Heart right ventricle (tissue), 16 donors: ENCODE measurements at regions of chr7 and their contacts with region 1.

Region 1: GRCh38 chr7:129224251-129225205 is at the start of gene AHCYL2:
- DNase-seq: peak; percentile 98 to 99
- ATAC-seq: peak; percentile 99 to 100 (median 99)
- H3K4me3 ChIP-seq: peak within 1 kb of the TSS; percentile 66 to 97 (median 82)
- H3K27ac ChIP-seq: peak within 1 kb of the TSS; percentile 83 to 98 (median 92)
- H3K4me1 ChIP-seq: peaks cover 0 to 30% (median 15%) of the 10 kb centered on the region in 9 donors
- H3K27me3 ChIP-seq: no peaks in the 10 kb centered on the region
- CTCF ChIP-seq: no peak
- total RNA-seq, gene AHCYL2: 4.6 to 7.7 (median 5.7) TPM

Region 2: DNA sequence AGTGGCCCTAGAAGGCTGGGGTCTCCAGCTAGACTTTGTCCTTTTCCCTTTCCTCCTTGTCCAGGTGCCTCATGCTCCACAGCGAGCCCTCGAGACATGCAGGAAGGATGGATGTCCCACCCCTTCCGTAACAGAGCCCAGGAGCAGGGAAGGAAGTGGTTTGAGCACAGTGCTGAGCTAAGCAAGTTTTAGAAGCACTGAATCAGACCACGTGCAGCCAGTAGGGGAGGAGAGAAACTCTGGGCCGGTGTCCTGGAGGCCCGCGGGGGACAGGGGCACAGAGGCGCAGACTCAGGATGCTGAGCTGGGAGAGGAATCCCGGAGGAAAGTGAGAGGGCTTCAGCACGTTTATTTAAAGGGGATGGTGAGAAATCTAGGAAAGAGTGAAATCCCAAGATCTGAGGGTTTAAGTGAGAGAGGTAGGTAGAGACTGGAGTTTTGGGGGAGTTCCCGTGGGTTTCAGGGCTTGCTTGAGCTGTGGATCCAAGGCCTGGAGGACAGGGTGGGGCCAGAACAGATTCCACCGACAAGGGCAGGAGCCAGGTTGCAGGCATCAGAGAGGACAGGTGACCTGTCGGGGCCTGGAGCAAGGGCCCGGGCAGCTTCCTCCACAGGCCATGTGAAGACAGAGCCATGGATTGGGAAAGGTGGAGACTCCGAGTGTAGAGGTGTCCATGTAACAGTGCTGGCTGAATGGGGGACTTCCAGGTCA is 291.2 kb before region 1 on chr7:
- intact Hi-C with region 1: no loop called
- DNase-seq: no peak
- ATAC-seq: peak in 7 of 8 donors; percentile 39 to 70 (median 59)
- H3K4me3 ChIP-seq: peak overlapping the region in 1 of 10 donors; percentile 10
- H3K27ac ChIP-seq: peak overlapping the region in 1 of 10 donors; percentile 81
- H3K4me1 ChIP-seq: peaks cover 0 to 47% (median 5%) of the 10 kb centered on the region in 9 donors
- H3K27me3 ChIP-seq: peaks cover 0 to 70% (median 30%) of the 10 kb centered on the region in 7 donors
- CTCF ChIP-seq: no peak

Region 3: GRCh38 chr7:129298268-129298893 is 73.9 kb after region 1 on chr7:
- intact Hi-C with region 1: loop called in 6 of 10 experiments (anchors 2 to 5 kb)
- DNase-seq: peak; percentile 21 to 34
- ATAC-seq: no peak
- H3K4me3 ChIP-seq: no peak overlapping the region
- H3K27ac ChIP-seq: no peak overlapping the region
- H3K4me1 ChIP-seq: peaks cover 0 to 12% (median 8%) of the 10 kb centered on the region in 9 donors
- H3K27me3 ChIP-seq: no peaks in the 10 kb centered on the region
- CTCF ChIP-seq: peak; percentile 29 to 81 (median 73)

Region 4: DNA sequence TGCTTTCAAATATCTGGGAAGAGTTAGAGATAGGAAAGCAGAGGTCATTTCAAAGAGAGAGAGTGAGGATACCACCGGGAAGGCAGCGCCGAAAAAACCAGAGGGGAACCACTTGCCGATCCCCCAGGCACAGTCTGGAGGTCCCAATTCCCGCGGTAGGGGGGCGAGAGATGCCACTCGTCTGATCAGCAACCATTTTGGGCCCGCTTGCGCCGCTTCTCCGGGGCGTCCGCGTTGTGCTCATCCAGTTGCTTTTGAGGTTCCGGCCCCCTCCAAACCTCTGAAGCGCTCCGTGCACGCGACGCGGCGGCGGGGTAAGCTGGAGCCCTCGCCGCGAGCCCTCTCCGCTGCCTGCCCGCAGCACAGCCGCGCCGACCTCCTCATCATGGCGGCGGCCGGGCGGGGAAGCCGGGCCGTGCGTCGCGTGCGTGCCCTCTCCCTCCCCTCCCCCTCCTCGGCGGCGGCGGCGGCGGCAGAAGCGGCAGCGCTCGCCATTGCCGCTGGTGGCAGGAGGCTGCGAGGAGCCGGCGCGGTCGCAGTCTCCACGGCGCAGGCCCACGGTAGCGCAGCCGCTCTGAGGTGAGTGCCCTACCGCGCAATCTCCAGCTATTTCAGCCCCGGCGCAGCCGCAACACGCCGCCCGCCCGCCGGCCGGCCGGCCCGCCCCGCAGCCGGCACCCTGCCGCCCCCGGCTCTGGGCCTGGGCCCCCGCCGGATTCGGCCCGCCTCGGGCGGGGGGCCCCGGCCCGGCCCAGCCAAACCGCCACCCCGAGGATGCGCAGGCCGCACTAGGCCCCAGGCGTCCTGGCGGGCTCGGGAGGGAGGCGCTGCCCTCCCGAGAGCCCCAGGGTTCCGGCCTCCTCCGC is 387.0 kb after region 1 on chr7 and contains the start of gene NRF1:
- intact Hi-C with region 1: loop called in 3 of 10 experiments (anchors 5 to 10 kb)
- DNase-seq: peak; percentile 90 to 92
- ATAC-seq: peak; percentile 95 to 98 (median 97)
- H3K4me3 ChIP-seq: peak within 1 kb of the TSS; percentile 66 to 93 (median 88)
- H3K27ac ChIP-seq: peak within 1 kb of the TSS; percentile 86 to 98 (median 98)
- H3K4me1 ChIP-seq: peaks cover 0 to 66% (median 35%) of the 10 kb centered on the region in 9 donors
- H3K27me3 ChIP-seq: no peaks in the 10 kb centered on the region
- CTCF ChIP-seq: peak in 6 of 9 donors; percentile 14 to 37 (median 36)
- total RNA-seq, gene NRF1: 8.3 to 16.0 (median 13.0) TPM